H1 (cell line): ENCODE measurements at regions of chr6 and their contacts with region 1.

Region 1: DNA sequence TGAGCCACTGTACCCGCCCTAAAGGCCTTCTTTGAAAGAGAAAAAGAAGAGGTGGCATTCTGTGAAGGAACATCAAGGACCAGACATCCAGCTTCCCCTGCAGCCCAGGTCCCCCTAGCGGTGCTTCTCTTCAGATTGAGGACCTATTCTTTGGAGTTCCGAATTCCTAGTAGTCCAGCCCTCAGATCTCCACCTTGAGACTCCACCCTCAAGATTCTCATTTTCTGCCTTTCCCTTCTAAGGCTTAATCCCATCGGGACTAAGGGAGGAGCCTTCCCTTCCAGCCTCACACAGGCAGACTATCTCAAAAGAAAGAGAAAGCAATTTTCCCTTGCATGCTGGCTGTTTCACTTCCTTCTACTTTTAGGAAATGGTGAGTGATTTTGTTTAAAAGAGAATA is 32.5 kb downstream of the MUC22 start:
- DNase-seq: peak; percentile 21 to 60
- H3K4me3 ChIP-seq: no peak overlapping the region
- H3K27ac ChIP-seq: no peak overlapping the region
- H3K4me1 ChIP-seq: no peaks in the 10 kb centered on the region
- H3K27me3 ChIP-seq: no peaks in the 10 kb centered on the region; a peak in 1 of 7 replicates
- CTCF ChIP-seq: peak; percentile 58 to 75 (median 74)
- EP300 ChIP-seq: no peak
- POLR2A ChIP-seq: no peak
- RAD21 ChIP-seq: peak; percentile 61 to 72

Region 2: GRCh38 chr6:30844091-30844535 is 198.7 kb before region 1 on chr6:
- CTCF ChIA-PET with region 1: no interaction called
- POLR2A ChIA-PET with region 1: no interaction called
- DNase-seq: no peak
- H3K4me3 ChIP-seq: no peak overlapping the region
- H3K27ac ChIP-seq: 0 out of 2 replicates have a peak overlapping the region, but pooled peaks have one; percentile 45
- H3K4me1 ChIP-seq: peaks cover 5 to 13% (median 8%) of the 10 kb centered on the region in 4 experiments
- H3K27me3 ChIP-seq: no peaks in the 10 kb centered on the region
- CTCF ChIP-seq: 0 out of 4 replicates have a peak, but pooled peaks of 1 of the 3 experiments have one; percentile 12
- EP300 ChIP-seq: peak in 1 of 2 experiments; percentile 55; a peak in 1 of 3 replicates
- POLR2A ChIP-seq: peak; percentile 60 to 76; a peak in 2 of 3 replicates
- RAD21 ChIP-seq: peak; percentile 29 to 39; a peak in 2 of 4 replicates

Region 3: GRCh38 chr6:31016659-31017299 is 26.0 kb before region 1 on chr6:
- CTCF ChIA-PET with region 1: interaction called, 12 read pairs
- POLR2A ChIA-PET with region 1: interaction called, 3 read pairs
- DNase-seq: no peak
- H3K4me3 ChIP-seq: no peak overlapping the region
- H3K27ac ChIP-seq: no peak overlapping the region
- H3K4me1 ChIP-seq: no peaks in the 10 kb centered on the region; a peak in 1 of 7 replicates
- H3K27me3 ChIP-seq: no peaks in the 10 kb centered on the region; a peak in 1 of 7 replicates
- CTCF ChIP-seq: no peak
- EP300 ChIP-seq: no peak
- POLR2A ChIP-seq: no peak
- RAD21 ChIP-seq: no peak

Region 4: GRCh38 chr6:31058128-31058894 is 15.5 kb after region 1 on chr6:
- CTCF ChIA-PET with region 1: interaction called, 23 read pairs
- POLR2A ChIA-PET with region 1: interaction called, 3 read pairs
- DNase-seq: no peak
- H3K4me3 ChIP-seq: no peak overlapping the region
- H3K27ac ChIP-seq: no peak overlapping the region
- H3K4me1 ChIP-seq: no peaks in the 10 kb centered on the region; a peak in 1 of 7 replicates
- H3K27me3 ChIP-seq: no peaks in the 10 kb centered on the region
- CTCF ChIP-seq: peak in 2 of 3 experiments; percentile 14 to 57; a peak in 2 of 4 replicates
- EP300 ChIP-seq: no peak
- POLR2A ChIP-seq: no peak
- RAD21 ChIP-seq: peak in 1 of 2 experiments; percentile 11; a peak in 1 of 4 replicates